T-cell (primary cell): ENCODE measurements at regions of chr4 and their contacts with region 1.

Region 1: DNA sequence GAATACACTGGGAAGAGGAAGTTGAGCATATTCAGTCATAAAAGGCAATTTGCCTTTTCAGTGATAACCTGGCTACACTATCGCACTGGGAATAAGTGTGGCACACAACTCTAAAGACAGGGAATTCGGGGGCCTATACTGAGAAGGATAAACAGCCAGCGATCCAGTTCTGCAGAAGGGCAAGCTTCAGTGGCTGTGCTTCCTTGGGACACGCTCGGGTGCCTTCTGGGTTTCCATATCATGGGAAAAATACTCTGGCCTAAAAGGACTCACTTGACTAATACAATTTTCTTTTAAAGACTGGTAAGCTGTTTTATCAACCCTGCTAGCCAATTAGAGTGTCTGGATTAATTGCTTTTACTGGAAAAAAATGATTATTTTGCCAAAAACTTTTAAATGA is 58.5 kb downstream of the TENM3 start:
- DNase-seq: no peak
- ATAC-seq: no peak
- H3K4me3 ChIP-seq: no peak overlapping the region
- H3K4me3 Mint-ChIP-seq: no peak overlapping the region
- H3K27ac ChIP-seq: no peak overlapping the region
- H3K27ac Mint-ChIP-seq: no peak overlapping the region
- H3K4me1 ChIP-seq: no peaks in the 10 kb centered on the region
- H3K4me1 Mint-ChIP-seq: no peaks in the 10 kb centered on the region
- H3K27me3 ChIP-seq: no peaks in the 10 kb centered on the region
- H3K27me3 Mint-ChIP-seq: peaks cover 0 to 6% of the 10 kb centered on the region in 2 donors

Region 2: DNA sequence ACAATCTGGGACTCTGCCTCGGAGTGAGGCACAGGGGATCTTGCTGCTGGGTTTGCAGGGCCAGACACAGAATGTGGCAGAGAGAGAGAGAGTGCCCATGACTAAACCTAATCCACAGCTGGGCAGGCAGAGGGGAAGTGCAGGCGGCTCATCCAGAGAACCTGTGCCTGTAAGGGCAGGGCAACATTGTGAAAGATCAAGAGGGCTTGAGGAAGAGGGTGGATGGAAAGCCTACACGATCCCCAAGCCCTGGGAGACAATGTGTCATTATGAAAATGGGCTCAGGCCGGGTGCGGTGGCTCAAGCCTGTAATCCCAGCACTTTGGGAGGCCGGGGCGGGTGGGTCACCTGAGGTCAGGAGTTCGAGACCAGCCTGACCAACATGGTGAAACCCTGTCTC is 99.1 kb before region 1 on chr4:
- CTCF ChIA-PET with region 1: no interaction called
- POLR2A ChIA-PET with region 1: interaction called in 1 of 2 experiments, 16 read pairs
- DNase-seq: no peak
- ATAC-seq: no peak
- H3K4me3 ChIP-seq: no peak overlapping the region
- H3K4me3 Mint-ChIP-seq: no peak overlapping the region
- H3K27ac ChIP-seq: no peak overlapping the region
- H3K27ac Mint-ChIP-seq: no peak overlapping the region
- H3K4me1 ChIP-seq: no peaks in the 10 kb centered on the region
- H3K4me1 Mint-ChIP-seq: no peaks in the 10 kb centered on the region
- H3K27me3 ChIP-seq: peaks cover 0 to 5% of the 10 kb centered on the region in 2 experiments
- H3K27me3 Mint-ChIP-seq: peaks cover 0 to 4% of the 10 kb centered on the region in 2 donors

Region 3: GRCh38 chr4:182367153-182367552 is 65.4 kb after region 1 on chr4:
- CTCF ChIA-PET with region 1: no interaction called
- POLR2A ChIA-PET with region 1: no interaction called
- DNase-seq: no peak
- ATAC-seq: no peak
- H3K4me3 ChIP-seq: no peak overlapping the region
- H3K4me3 Mint-ChIP-seq: no peak overlapping the region
- H3K27ac ChIP-seq: no peak overlapping the region
- H3K27ac Mint-ChIP-seq: no peak overlapping the region
- H3K4me1 ChIP-seq: no peaks in the 10 kb centered on the region
- H3K4me1 Mint-ChIP-seq: no peaks in the 10 kb centered on the region
- H3K27me3 ChIP-seq: no peaks in the 10 kb centered on the region
- H3K27me3 Mint-ChIP-seq: peaks cover 6% of the 10 kb centered on the region in 2 donors